Sigmoid colon (tissue), 7 donors: ENCODE measurements at regions of chr15 and their contacts with region 1.

Region 1: DNA sequence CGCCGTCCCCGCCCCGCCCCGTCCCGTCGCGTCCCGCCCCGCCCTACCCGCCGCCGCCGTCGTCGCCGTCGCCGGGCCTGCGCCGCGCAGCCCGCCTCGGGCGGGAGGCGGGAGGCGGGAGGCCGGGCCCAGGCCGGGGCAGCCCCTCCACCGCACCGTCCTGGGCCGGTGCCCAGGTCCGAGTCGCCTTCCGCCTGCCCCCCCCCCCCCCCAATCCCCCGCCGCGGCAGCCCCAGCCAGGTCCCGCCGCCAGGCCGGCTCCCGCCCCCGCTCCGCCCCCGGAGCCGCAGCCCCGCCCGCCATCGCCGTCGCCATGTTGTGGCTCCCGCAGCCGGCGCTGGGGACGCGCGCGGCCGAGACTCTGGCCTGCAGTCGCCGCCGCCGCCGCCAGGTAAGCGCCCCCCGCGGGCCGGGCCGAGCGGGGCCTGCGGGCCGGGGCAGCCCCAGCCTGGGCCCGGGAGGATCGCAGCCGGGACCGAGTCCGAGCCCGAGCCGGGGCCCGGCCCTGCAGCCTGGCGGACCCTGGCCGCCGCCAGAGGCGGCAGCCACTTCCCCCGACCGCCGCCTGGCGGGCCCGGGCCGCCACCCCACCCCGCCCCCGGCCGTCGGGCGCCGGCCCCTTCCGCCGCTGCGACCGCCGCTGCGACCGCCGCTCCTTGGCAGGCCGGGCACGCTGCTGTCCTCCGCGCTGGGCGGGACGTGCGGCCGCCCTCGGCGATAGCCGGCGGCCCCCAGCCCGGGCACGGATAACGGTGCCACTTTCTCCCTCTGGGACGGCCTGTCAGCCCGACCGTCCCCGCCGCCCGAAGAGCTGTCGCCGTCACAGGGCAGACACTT is at the start of gene ZNF592:
- DNase-seq: peak; percentile 93
- H3K4me3 ChIP-seq: peak within 1 kb of the TSS; percentile 77 to 95 (median 88)
- H3K27ac ChIP-seq: peak within 1 kb of the TSS; percentile 99 to 100 (median 100)
- H3K4me1 ChIP-seq: peaks cover 0 to 68% (median 47%) of the 10 kb centered on the region in 4 donors
- H3K27me3 ChIP-seq: no peaks in the 10 kb centered on the region
- CTCF ChIP-seq: no peak
- EP300 ChIP-seq: no peak
- POLR2A ChIP-seq: no peak
- total RNA-seq, gene ZNF592: 12.5 to 14.1 (median 13.7) TPM

Region 2: DNA sequence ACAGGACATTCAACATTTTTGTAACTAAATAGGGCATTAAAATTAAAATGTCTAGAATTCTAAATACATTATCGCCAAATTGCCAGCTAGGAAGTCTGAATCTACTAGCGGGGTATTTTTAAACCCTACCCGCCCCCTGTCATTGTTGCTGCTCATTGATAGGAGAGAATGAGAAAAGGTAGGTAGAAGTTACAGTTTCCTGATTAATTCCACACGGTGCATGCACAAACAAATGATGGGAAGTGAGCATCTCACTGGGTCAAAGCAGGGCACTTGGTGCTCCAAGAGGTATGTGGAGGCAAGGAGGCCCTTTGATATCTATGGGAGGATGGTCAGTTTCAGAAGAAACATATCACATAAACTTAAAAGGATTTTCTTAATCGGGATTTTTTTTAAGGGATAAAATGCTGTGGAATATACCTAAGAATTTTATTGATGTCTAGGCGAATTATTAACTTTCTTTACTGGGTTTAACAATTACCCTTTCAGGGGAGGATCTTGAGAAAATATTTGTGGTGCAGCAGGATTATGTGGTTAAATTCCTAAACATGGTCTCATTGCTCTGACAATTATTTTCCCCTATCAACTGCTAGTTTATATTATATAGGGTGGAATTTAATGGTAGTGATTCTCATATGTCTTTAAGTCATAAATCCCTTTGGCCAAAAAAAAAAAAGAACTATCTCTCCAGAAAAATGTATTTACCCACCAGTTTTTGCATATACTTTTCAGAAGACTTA is 748.9 kb before region 1 on chr15:
- intact Hi-C with region 1: no loop called
- DNase-seq: no peak
- H3K4me3 ChIP-seq: no peak overlapping the region
- H3K27ac ChIP-seq: no peak overlapping the region
- H3K4me1 ChIP-seq: no peaks in the 10 kb centered on the region
- H3K27me3 ChIP-seq: no peaks in the 10 kb centered on the region
- CTCF ChIP-seq: no peak
- EP300 ChIP-seq: no peak
- POLR2A ChIP-seq: no peak

Region 3: GRCh38 chr15:84633311-84634227 is 114.9 kb before region 1 on chr15:
- intact Hi-C with region 1: loop called (anchors 2 kb)
- DNase-seq: peak; percentile 83
- H3K4me3 ChIP-seq: peak overlapping the region; percentile 55 to 79 (median 67)
- H3K27ac ChIP-seq: peak overlapping the region; percentile 88 to 97 (median 92)
- H3K4me1 ChIP-seq: peaks cover 0 to 48% (median 38%) of the 10 kb centered on the region in 4 donors
- H3K27me3 ChIP-seq: no peaks in the 10 kb centered on the region
- CTCF ChIP-seq: no peak
- EP300 ChIP-seq: no peak
- POLR2A ChIP-seq: no peak

Region 4: GRCh38 chr15:84716036-84716799 is 32.3 kb before region 1 on chr15 and contains the start of gene SEC11A:
- intact Hi-C with region 1: loop called (anchors 1 kb)
- DNase-seq: peak; percentile 96
- H3K4me3 ChIP-seq: peak within 1 kb of the TSS; percentile 71 to 87 (median 76)
- H3K27ac ChIP-seq: peak within 1 kb of the TSS; percentile 86 to 95 (median 94)
- H3K4me1 ChIP-seq: peaks cover 0 to 28% (median 24%) of the 10 kb centered on the region in 4 donors
- H3K27me3 ChIP-seq: no peaks in the 10 kb centered on the region
- CTCF ChIP-seq: no peak
- EP300 ChIP-seq: no peak
- POLR2A ChIP-seq: peak; percentile 60 to 86
- total RNA-seq, gene SEC11A: 83.9 to 153 (median 112) TPM

Region 5: GRCh38 chr15:84773716-84774115 is 25.2 kb after region 1 on chr15:
- intact Hi-C with region 1: no loop called
- DNase-seq: no peak
- H3K4me3 ChIP-seq: no peak overlapping the region
- H3K27ac ChIP-seq: no peak overlapping the region
- H3K4me1 ChIP-seq: peaks cover 0 to 21% (median 17%) of the 10 kb centered on the region in 4 donors
- H3K27me3 ChIP-seq: no peaks in the 10 kb centered on the region
- CTCF ChIP-seq: no peak
- EP300 ChIP-seq: no peak
- POLR2A ChIP-seq: no peak

Region 6: GRCh38 chr15:84797212-84797611 is 48.7 kb after region 1 on chr15:
- intact Hi-C with region 1: no loop called
- DNase-seq: no peak
- H3K4me3 ChIP-seq: no peak overlapping the region
- H3K27ac ChIP-seq: no peak overlapping the region
- H3K4me1 ChIP-seq: peaks cover 0 to 10% (median 8%) of the 10 kb centered on the region in 4 donors
- H3K27me3 ChIP-seq: no peaks in the 10 kb centered on the region
- CTCF ChIP-seq: no peak
- EP300 ChIP-seq: no peak
- POLR2A ChIP-seq: no peak

Region 7: DNA sequence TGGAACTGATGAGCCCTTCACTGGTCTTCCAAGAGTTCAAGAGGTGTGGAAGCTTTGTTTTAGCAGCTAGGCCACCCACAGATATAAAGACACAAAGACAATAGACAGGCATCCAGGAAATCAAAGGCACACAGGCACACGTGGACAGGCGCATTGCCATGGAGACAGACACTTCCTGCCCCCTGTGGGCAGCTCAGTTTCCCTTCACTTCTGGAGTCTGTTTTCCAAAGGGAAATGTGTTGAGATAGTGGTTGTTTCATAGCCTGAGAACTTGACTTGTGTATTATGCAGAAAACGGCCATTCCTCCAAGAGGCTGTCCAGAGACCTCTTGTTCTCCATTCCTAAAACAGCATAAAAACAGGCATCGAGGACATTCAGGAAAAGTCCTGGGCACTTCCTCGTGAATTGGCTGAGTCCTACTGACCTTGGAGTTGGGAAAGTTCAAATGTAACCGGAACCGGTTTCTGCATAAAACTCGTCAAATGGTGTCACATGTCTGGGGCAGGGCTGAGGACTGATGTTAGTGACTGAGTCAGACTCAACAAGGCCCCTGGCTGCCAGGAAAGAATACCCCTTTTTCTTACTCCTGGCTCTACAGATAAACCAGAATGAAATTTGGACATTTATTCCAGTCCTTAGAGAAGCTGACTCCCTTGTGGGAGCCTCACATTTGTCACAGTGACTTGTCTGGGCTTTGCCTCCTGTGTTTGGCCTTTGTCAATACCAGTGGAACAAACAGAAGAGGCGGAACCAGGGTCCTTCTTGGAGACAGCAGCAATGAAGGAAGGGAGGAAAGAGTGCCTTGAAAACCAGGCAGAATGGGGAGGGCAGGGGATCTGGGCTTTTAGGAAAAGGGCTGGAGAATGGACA is 70.0 kb after region 1 on chr15:
- intact Hi-C with region 1: loop called (anchors 2 kb)
- DNase-seq: no peak
- H3K4me3 ChIP-seq: peak overlapping the region in 3 of 4 donors; percentile 44 to 66 (median 55)
- H3K27ac ChIP-seq: peak overlapping the region; percentile 76 to 94 (median 86)
- H3K4me1 ChIP-seq: peaks cover 0 to 67% (median 56%) of the 10 kb centered on the region in 4 donors
- H3K27me3 ChIP-seq: no peaks in the 10 kb centered on the region
- CTCF ChIP-seq: no peak
- EP300 ChIP-seq: no peak
- POLR2A ChIP-seq: no peak

Region 8: DNA sequence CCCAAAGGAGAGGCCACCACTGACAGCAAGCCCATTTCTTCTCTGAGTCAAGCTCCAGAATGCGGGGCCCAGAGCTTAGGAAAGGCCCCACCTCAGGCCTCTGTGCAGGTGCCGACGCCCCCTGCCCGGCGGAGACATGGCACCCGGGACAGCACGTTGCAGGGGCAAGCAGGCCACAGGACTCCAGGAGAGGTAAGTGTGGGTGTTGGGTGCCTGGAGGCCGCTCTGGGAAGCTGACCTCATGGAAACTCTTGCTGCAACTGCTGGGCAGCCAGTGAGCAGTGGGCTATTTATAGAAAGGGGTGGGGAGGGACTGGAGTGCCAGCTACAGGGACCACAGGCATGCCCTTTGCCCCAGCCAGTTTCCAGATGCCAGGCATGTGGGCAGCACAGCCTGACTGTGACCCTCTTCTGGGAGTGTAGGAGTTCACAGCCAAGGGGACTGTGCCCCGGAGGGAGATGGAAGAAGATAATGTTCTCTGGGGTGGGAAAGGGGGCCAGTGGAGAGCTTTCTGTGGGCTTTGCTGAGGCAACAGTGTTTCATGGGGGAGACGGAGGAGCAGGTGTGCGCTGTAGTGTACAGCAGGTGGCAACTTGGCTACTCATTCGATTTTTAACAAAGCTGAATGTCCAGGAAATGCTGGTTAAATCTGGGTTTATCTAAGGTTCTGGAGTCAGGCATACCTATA is 92.4 kb after region 1 on chr15:
- intact Hi-C with region 1: loop called (anchors 5 kb)
- DNase-seq: peak; percentile 93
- H3K4me3 ChIP-seq: no peak overlapping the region
- H3K27ac ChIP-seq: peak overlapping the region; percentile 75 to 90 (median 82)
- H3K4me1 ChIP-seq: peaks cover 0 to 46% (median 36%) of the 10 kb centered on the region in 4 donors
- H3K27me3 ChIP-seq: no peaks in the 10 kb centered on the region
- CTCF ChIP-seq: no peak
- EP300 ChIP-seq: peak; percentile 49 to 90 (median 76)
- POLR2A ChIP-seq: no peak

Region 9: DNA sequence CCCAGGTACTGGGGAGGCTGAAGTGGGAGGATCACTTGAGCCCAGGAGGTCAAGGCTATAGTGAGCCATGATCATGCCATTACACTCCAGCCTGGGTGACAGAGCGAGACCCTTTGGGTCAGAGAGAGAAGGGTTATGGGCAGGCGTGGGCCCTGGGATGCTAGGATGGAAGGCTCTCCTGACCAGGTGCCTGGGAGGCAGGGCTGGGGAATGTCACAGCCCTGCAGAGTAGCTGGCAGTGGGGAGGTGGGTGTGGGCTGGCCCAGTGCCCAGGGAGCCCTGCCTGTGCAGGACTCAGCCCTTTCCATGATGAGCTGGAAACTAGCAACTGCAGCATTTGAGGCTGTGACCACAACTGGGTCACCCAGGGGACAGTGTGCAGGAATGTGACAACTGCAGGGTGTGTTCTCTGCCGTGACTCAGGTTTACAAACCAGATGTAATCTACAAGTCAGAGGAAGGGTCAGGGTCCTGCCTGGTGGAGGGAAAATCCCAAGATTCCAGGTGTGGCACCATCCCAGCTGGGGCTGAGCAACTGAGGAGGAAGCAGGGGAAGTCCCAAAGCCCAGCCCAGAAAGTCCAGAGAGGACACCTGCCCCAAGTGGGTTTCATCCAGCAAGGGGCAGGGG is 181.4 kb after region 1 on chr15:
- intact Hi-C with region 1: loop called (anchors 2 kb)
- DNase-seq: no peak
- H3K4me3 ChIP-seq: no peak overlapping the region
- H3K27ac ChIP-seq: no peak overlapping the region
- H3K4me1 ChIP-seq: peaks cover 0 to 8% (median 7%) of the 10 kb centered on the region in 4 donors
- H3K27me3 ChIP-seq: no peaks in the 10 kb centered on the region
- CTCF ChIP-seq: no peak
- EP300 ChIP-seq: no peak
- POLR2A ChIP-seq: no peak